Caco-2 (cell line): ENCODE measurements at regions of chr10 and their contacts with region 1.

Region 1: DNA sequence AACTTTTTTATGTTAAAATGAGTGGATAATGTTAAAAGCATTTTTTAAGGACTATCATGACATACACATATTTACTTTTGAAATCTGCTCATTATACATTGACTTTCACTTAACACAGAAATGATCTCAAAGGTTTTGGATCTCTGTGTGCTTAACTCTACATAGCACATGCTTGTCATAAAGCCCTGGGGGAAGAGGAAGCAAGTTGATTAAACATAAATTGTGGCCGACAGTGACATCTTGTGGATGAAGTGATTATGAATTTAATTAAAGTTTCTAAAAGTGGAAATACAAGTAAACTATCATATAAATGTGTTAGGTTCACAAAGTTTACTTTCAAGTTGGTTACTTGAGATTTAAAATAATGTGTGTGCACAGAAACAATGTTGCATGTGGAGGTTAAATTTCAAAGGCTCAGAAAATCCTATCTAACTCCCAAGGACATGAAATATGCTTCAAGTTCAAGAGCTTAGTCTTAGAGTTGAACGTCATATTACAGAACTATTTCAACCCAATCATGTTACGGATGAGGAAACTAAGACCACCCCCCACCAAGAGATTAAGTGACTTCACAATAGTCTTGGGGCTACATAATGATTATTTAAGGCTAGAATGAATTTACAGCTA is 1247.7 kb downstream of the GATA3 start:
- DNase-seq: peak in 1 of 2 experiments; percentile 53
- H3K4me3 ChIP-seq: no peak overlapping the region
- H3K4me3 Mint-ChIP-seq: no peak overlapping the region
- H3K27ac Mint-ChIP-seq: no peak overlapping the region
- H3K4me1 ChIP-seq: no peaks in the 10 kb centered on the region
- H3K4me1 Mint-ChIP-seq: no peaks in the 10 kb centered on the region
- H3K27me3 ChIP-seq: no peaks in the 10 kb centered on the region
- H3K27me3 Mint-ChIP-seq: peaks cover 7% of the 10 kb centered on the region
- CTCF ChIP-seq: peak; percentile 40 to 48

Region 2: DNA sequence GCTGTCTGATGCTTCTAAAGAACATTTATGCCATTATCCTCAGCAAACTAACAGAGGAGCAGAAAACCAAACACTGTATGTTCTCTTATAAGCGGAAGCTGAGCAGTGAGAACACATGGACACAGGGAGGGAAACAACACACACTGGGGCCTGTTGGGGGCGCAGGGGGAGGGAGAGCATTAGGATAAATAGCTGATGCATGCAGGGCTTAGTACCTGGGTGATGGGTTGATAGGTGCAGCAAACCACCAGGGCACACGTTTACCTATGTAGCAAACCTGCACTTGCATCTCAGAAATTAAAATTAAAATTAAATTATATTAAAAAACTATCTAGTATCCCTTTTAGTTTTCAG is 394.2 kb before region 1 on chr10:
- CTCF ChIA-PET with region 1: no interaction called
- POLR2A ChIA-PET with region 1: no interaction called
- intact Hi-C with region 1: loop called (anchors 10 kb)
- DNase-seq: peak in 1 of 2 experiments; percentile 29
- H3K4me3 ChIP-seq: no peak overlapping the region
- H3K4me3 Mint-ChIP-seq: no peak overlapping the region
- H3K27ac Mint-ChIP-seq: no peak overlapping the region
- H3K4me1 ChIP-seq: no peaks in the 10 kb centered on the region
- H3K4me1 Mint-ChIP-seq: no peaks in the 10 kb centered on the region
- H3K27me3 ChIP-seq: no peaks in the 10 kb centered on the region
- H3K27me3 Mint-ChIP-seq: peaks cover 1% of the 10 kb centered on the region
- CTCF ChIP-seq: peak in 1 of 2 experiments; percentile 13

Region 3: DNA sequence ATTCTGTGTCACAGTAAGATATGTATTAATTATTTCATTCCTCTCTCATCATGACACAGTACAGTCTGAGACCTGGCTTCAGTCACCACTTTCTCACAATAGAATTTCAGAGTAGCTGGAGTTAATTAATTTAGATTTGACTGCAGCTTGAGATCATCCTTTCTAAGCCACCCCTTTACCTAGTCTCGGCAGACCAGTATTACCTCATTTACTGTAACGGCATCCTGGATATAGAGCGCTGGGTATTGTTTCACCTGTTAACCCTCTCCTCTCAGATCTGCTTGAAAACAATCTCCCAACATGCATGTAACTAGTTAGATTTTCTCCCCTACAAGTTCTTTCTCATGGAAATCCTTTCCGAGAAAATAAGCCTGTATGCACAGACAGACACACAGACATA is 190.3 kb before region 1 on chr10:
- CTCF ChIA-PET with region 1: no interaction called
- POLR2A ChIA-PET with region 1: no interaction called
- intact Hi-C with region 1: no loop called
- DNase-seq: no peak
- H3K4me3 ChIP-seq: no peak overlapping the region
- H3K4me3 Mint-ChIP-seq: no peak overlapping the region
- H3K27ac Mint-ChIP-seq: no peak overlapping the region
- H3K4me1 ChIP-seq: no peaks in the 10 kb centered on the region
- H3K4me1 Mint-ChIP-seq: no peaks in the 10 kb centered on the region
- H3K27me3 ChIP-seq: no peaks in the 10 kb centered on the region
- H3K27me3 Mint-ChIP-seq: no peaks in the 10 kb centered on the region
- CTCF ChIP-seq: no peak